Aorta (tissue), 5 donors: ENCODE measurements at regions of chr11 and their contacts with region 1.

Region 1: GRCh38 chr11:79493555-79494171 is 52.8 kb upstream of the TENM4 start:
- DNase-seq: peak; percentile 70 to 86
- ATAC-seq: peak; percentile 79
- H3K4me3 ChIP-seq: no peak overlapping the region
- H3K27ac ChIP-seq: no peak overlapping the region
- H3K4me1 ChIP-seq: no peaks in the 10 kb centered on the region
- H3K27me3 ChIP-seq: no peaks in the 10 kb centered on the region

Region 2: DNA sequence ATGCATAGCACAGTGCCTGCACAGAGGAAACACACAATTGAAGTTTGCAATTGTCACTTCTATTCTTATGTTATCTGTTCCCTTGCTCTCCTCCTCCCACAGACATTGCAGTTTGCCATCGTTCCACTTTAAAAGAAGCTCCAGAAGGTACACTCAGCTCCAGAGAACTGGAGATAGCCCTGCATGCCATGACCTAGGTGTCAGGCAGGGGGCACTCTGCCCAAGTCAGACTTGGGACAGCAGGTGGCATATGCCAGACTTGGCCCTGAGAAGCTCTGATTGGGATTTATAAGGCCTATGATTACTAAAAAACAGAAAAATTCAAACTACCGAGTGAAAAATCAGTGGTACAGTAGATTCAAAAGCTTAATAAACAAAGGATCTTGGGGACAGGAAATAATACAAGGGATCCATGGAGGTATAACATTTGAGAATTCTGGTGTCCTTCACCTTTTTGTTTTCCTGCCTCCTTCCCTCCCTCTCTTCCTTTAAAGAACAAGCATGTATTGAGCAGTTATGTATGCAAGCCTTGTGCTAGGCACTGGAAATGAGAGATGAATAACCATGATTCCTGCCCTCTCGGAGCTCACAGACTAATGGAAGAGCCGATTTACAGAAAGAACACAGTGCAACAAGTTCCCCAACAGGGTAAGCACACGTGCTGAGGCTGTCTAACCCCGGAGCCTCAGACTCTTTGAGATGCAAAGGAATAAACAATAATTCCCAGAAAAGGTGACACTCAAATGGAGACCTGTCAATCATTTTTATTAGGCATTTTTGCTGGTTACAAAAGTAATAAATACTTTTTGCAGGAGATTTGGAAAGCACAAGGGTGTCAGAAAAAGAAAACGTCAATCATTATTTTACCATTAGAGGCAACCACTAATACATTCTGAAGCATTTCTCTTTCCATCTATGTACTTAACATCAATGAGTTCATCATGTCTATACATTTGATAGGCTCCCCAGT is 92.7 kb before region 1 on chr11:
- intact Hi-C with region 1: loop called (anchors 2 to 5 kb)
- DNase-seq: peak; percentile 51 to 79
- ATAC-seq: no peak
- H3K4me3 ChIP-seq: no peak overlapping the region
- H3K27ac ChIP-seq: no peak overlapping the region
- H3K4me1 ChIP-seq: no peaks in the 10 kb centered on the region
- H3K27me3 ChIP-seq: no peaks in the 10 kb centered on the region